Activated T-helper 1 cell treated with anti-CD3 and anti-CD28 coated beads, Interleukin-12 subunit alpha, Interleukin-12 subunit beta, Interleukin-2, Interleukin-4 antibody, amounts not matched to agents 30 ng/mL and 10 ng/mL and 1 ng/mL, durations not matched to agents 14 hours and 24 hours and 36 hours (primary cell): ENCODE measurements at regions of chr7 and their contacts with region 1.

Region 1: DNA sequence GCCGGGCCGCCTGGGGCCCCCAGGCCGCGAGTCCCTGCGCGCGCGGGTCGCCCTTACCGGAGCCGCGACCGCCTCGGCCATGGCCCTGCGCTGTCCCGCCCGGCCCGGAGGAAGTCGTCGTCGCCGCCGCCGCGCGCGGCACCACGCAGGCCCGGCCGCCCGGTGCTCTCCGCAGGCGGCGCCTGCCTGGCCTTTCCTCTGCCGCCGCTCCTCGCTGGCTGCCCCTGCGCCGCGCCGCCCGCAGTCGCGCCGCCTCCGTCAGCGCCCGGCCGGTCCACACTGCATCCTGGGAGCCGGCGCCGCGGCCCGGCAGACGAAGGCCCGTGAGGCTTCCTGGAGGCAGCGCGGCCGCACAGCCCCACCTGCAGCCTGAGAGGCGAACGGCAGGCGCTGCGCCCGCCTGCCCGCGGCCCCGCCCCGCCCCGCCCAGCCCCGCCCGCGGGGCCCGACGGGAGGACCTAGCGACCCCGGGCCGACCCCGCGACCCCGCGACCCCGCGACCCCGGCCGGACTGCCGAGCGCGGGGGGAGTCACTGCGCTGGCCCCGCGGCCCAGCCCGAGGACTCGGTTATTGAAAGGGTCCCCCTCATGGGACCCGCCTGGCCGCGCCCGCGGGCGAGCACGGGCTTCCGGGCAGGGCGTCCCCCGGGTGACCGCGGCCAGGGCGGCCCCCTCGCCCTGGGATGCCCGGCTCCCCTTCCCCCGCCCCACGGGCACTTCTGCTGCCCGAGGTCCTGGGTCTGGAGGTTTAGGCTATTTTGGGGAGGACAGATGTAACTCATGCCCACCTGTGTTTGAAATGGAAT is at the start of gene ZNF746:
- DNase-seq: peak; percentile 78
- H3K4me3 Mint-ChIP-seq: peak within 1 kb of the TSS; percentile 99
- H3K27ac Mint-ChIP-seq: peak within 1 kb of the TSS; percentile 96
- H3K4me1 Mint-ChIP-seq: peaks cover 43% of the 10 kb centered on the region
- H3K27me3 Mint-ChIP-seq: no peaks in the 10 kb centered on the region
- total RNA-seq, gene ZNF746: 27.7 and 28.1 TPM in 2 replicates

Region 2: DNA sequence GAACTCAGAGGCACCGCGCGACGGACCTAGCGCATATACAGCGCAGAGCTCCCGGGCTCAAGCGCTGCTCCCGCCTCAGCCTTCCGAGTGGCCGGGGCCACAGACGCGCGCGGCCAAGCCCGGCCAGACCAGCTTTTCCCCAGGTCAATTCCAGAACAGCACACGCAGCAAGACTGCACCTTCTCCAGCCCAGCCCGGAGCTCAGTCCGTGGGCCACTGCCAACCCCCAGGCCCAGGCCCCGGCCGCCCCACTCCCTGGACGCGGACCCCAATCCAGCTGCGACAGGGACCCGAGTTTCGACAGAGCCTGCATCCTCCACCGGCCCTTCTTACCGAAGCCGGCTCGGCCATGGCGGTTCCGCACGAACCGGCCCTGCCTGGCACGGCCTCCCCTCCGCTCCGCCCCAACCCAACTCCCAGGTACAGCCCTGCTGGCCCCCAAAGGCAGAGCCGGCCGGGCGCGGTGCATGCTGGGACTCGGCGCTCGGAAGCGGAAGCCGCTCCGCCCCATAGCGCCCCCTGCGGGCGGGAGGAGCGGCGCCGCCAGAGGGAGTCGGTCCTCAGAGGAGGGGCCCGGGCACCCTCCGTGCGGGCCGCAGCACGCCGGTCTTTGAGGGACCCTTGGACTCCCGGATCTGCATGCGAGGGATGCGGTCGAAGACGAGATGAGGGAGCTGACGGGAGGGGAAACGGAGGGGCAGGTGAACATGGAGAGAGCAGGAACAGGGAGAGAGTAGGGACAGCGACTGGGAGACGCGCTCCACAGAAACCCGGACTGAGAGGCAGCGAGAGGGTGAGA is 371.6 kb before region 1 on chr7 and contains the start of gene ZNF425:
- intact Hi-C with region 1: loop called (anchors 1 kb)
- DNase-seq: peak; percentile 93
- H3K4me3 Mint-ChIP-seq: peak within 1 kb of the TSS; percentile 100
- H3K27ac Mint-ChIP-seq: peak within 1 kb of the TSS; percentile 100
- H3K4me1 Mint-ChIP-seq: peaks cover 28% of the 10 kb centered on the region
- H3K27me3 Mint-ChIP-seq: no peaks in the 10 kb centered on the region
- total RNA-seq, gene ZNF425: 1.1 and 1.2 TPM in 2 replicates

Region 3: GRCh38 chr7:149261829-149262617 is 235.6 kb before region 1 on chr7 and contains the start of gene ZNF783:
- intact Hi-C with region 1: loop called (anchors 1 kb)
- DNase-seq: peak; percentile 81
- H3K4me3 Mint-ChIP-seq: peak within 1 kb of the TSS; percentile 88
- H3K27ac Mint-ChIP-seq: peak within 1 kb of the TSS; percentile 95
- H3K4me1 Mint-ChIP-seq: peaks cover 29% of the 10 kb centered on the region
- H3K27me3 Mint-ChIP-seq: no peaks in the 10 kb centered on the region
- total RNA-seq, gene ZNF783: 24.1 and 25.6 TPM in 2 replicates

Region 4: DNA sequence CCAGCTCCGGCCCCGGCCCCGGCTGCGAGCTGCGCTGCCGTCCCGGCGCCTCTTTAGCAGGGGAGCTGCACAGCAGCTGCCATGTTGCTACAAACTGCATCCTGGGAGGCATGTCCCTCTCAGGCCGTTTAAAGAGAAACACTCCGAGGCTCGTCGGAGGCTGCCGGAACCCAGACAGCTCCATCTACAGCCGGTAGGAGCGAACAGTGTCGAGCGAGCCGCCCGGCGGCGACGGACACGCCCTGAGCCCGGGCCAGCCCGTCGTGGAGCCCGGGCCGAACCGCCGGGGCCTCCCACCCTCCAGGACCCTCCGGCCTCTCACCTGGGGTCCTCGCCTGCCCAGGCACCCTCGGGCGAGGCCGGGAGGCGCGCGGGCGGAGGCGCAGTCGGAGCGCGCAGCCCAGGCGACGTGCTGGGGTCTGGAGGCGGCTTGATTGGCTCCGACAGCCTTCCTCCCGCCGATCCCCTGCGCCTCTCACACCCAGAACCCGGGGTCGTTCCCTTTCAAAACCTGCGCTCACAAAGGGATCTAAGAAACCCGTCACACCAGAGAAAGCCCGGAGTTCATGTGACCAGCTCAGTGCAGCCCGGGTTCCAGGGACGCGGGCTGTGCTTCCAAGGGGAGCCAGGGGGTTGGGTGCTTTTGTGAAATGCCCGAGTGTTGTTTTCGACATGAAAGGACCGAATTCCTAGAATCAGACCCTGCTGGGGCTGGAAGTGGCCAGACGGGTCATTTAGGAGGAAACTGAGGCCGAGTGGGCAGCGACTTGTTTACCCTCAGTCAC is 37.0 kb before region 1 on chr7 and contains the start of gene ZNF777:
- intact Hi-C with region 1: loop called (anchors 1 kb)
- DNase-seq: peak; percentile 80
- H3K4me3 Mint-ChIP-seq: peak within 1 kb of the TSS; percentile 85
- H3K27ac Mint-ChIP-seq: peak within 1 kb of the TSS; percentile 66
- H3K4me1 Mint-ChIP-seq: peaks cover 23% of the 10 kb centered on the region
- H3K27me3 Mint-ChIP-seq: peaks cover 27% of the 10 kb centered on the region
- total RNA-seq, gene ZNF777: 19.0 and 19.3 TPM in 2 replicates

Region 5: DNA sequence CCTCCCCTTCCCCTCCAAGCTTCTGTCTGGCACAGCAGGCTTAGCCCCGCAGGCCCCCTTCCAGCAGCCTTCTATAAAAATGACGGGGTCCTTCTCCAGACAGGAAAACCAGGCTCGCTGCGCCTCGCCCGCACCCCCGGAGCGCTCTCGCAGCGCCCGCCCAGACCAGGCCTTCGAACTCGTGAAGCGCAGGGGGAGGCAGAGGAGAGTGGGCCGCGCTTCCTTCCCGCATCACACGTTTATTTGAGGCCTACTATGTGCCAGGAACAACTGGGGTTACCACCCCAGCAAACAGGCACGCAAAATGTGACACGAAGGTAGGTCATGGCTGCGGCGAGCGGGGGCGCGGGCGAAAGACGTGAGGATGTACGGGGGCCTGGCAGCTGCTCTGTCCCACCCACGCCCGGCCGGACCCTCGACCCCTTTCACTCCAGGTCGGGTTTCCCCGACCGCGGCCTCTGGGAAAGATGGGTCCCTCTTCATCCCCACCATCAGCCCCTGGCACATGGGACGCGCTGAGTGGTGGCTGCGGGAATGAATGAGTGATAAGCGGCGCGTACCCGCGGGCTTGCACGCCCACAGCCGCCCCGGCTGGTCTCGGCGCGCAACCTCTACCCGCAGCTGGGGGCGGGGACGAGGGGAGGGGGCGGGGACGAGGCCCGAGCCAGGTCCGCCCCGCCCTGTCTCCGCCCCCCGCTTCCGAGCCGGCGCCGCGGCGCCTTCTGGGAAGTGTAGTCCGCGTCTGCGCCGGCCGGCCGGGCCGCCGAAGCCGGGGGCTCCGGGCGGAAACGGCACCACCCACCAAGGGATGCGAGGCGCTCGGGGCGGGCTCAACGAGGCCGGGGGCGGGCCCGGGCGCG is 216.6 kb after region 1 on chr7:
- intact Hi-C with region 1: loop called (anchors 5 kb)
- DNase-seq: peak; percentile 79
- H3K4me3 Mint-ChIP-seq: peak overlapping the region; percentile 74
- H3K27ac Mint-ChIP-seq: peak overlapping the region; percentile 68
- H3K4me1 Mint-ChIP-seq: peaks cover 13% of the 10 kb centered on the region
- H3K27me3 Mint-ChIP-seq: peaks cover 4% of the 10 kb centered on the region